HCT116 (cell line): ENCODE measurements at regions of chr11 and their contacts with region 1.

Region 1: GRCh38 chr11:64331557-64332371 is 8.2 kb upstream of the CCDC88B start:
- DNase-seq: peak; percentile 83
- ATAC-seq: peak; percentile 74
- H3K4me3 ChIP-seq: peak overlapping the region; percentile 19 to 37
- H3K27ac ChIP-seq: peak overlapping the region; percentile 68
- H3K4me1 ChIP-seq: peaks cover 29 to 53% of the 10 kb centered on the region in 2 experiments
- H3K27me3 ChIP-seq: no peaks in the 10 kb centered on the region
- CTCF ChIP-seq: peak in 2 of 3 experiments; percentile 74 to 89; a peak in 4 of 6 replicates
- POLR2A ChIP-seq: peak; percentile 43
- RAD21 ChIP-seq: no peak

Region 2: DNA sequence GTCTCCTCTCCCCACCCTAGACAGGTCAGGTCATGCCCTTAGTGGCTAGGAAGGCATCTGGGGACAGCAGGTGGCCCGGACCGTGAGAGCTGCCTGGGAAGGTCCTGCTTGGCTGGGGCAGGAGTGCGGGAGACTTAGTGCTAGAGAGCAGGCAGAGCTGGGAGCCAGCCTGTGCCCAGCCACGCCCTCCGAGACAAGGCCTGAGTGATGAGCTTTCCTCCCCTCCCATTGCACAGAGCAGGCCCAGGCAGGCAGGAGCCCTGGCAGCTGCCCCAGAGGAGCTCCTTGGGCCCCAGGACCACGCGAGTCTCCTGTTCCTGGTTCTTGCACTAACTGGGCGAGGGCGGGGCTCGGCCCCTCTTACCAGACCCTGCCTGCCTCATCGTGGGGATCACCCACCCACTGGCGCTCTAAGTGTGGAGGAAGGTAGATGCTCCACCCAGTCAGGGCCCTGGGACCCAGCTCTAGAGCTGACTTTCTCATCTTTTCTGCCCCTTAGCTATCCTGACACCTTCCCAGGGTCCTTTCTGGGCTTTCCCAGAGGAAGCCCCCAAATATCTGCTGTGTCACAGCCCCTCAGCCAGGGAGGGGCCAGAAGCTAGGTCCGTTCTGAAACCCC is 210.7 kb before region 1 on chr11:
- CTCF ChIA-PET with region 1: no interaction called
- POLR2A ChIA-PET with region 1: no interaction called
- RAD21 ChIA-PET with region 1: no interaction called
- intact Hi-C with region 1: no loop called
- DNase-seq: no peak
- ATAC-seq: peak; percentile 67
- H3K4me3 ChIP-seq: no peak overlapping the region
- H3K27ac ChIP-seq: no peak overlapping the region
- H3K4me1 ChIP-seq: no peaks in the 10 kb centered on the region; a peak in 1 of 4 replicates
- H3K27me3 ChIP-seq: no peaks in the 10 kb centered on the region
- CTCF ChIP-seq: no peak
- POLR2A ChIP-seq: no peak
- RAD21 ChIP-seq: no peak

Region 3: DNA sequence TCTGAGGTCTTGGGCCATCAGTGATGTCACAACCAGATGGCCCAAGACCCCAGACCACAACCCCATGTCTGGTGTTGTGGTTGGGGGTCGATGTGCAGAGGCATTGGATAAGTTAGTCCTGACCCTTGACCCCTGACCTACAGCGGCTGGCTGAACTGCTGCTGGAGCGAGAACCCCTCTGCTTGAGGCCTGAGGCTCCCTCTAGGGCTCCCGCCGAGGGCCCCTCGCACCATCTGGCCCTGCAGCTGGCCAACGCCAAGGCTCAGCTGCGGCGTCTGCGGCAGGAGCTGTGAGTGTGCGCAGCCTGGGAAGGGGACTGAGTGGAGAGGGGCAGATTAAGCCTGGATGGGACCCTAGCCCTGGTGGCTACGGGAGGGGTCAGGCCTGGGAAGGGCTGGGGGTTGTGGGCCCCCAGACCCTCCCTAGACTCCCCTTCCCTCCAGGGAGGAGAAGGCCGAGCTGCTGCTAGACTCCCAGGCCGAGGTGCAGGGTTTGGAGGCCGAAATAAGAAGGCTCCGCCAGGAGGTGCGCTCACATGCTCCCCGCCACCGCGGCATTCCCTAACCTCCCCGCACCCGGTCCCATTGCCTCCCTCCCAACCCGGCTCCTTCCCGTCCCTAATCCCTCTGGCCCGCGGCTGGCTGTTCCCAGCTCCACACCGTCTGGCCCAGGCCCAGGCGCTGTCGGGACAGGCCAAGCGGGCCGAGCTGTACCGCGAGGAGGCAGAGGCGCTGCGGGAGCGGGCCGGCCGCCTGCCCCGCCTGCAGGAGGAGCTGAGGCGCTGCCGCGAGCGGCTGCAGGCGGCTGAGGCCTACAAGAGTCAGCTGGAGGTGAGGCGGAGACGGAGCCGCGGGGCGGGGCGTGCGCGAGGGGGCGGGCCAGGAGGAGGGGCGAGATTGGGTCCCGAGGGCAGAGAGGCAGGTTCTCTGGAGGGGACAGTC is 10.4 kb after region 1 on chr11:
- CTCF ChIA-PET with region 1: interaction called, 16 read pairs
- POLR2A ChIA-PET with region 1: interaction called, 8 read pairs
- RAD21 ChIA-PET with region 1: interaction called in 1 of 2 experiments, 14 read pairs
- intact Hi-C with region 1: no loop called
- DNase-seq: peak; percentile 80
- ATAC-seq: peak; percentile 92
- H3K4me3 ChIP-seq: peak overlapping the region; percentile 43 to 61
- H3K27ac ChIP-seq: peak overlapping the region; percentile 81
- H3K4me1 ChIP-seq: peaks cover 14 to 35% of the 10 kb centered on the region in 2 experiments
- H3K27me3 ChIP-seq: no peaks in the 10 kb centered on the region
- CTCF ChIP-seq: peak in 1 of 3 experiments; percentile 51; a peak in 3 of 6 replicates
- POLR2A ChIP-seq: peak; percentile 58
- RAD21 ChIP-seq: no peak